ENCODE measurements at regions of chr7 and their contacts with region 1.

Region 1: GRCh38 chr7:28408960-28409715 is 3.2 kb upstream of the CREB5 start:
- DNase-seq: no peak
- ATAC-seq: peak; percentile 60
- H3K4me3 ChIP-seq: peak overlapping the region; percentile 53
- H3K27ac ChIP-seq: no peak overlapping the region
- H3K4me1 ChIP-seq: 0 out of 2 replicates have a peak, but pooled peaks cover 2% of the 10 kb centered on the region
- H3K27me3 ChIP-seq: peaks cover 0 to 14% of the 10 kb centered on the region in 2 experiments; a peak in 2 of 4 replicates
- CTCF ChIP-seq: no peak
- EP300 ChIP-seq: 0 out of 4 replicates have a peak, but pooled peaks of 1 of the 2 experiments have one; percentile 33
- POLR2A ChIP-seq: no peak
- RAD21 ChIP-seq: no peak

Region 2: DNA sequence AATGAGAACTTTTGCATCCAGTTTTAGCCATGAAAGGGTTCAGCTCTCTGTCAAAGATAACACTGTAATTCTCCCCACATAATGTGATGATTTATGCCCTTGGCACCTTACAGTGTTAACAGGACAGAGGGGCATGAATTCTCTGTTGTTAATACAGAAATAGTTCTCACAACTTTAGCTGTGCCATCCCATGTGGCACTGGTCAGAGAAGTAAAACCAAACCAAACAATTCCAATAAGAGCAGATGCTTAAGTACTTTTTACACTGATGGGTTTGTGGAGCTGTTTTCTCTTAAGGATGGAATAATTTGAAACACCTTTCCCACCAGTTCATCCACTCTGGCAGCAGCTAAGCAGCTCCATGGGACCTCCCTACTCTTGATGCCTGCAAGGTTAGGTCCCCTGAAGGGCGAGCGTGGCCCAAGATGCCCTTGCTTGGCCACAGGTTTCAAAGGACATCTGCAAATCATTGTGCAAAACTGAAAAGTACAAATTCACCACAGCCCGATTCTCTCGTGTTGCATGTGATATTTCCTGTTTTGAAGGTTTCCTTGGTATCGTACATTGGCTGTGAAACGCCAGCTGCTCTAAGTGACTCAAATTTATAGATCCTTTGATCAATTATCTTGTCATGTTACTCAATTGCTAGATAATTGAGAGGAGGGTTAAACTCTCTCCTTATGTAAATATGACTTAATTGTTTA is 79.3 kb before region 1 on chr7:
- CTCF ChIA-PET with region 1: no interaction called
- POLR2A ChIA-PET with region 1: interaction called, 10 read pairs
- RAD21 ChIA-PET with region 1: no interaction called
- SMC1A ChIA-PET with region 1: no interaction called
- in situ Hi-C with region 1: no loop called
- intact Hi-C with region 1: no loop called
- DNase-seq: no peak
- ATAC-seq: peak; percentile 77
- H3K4me3 ChIP-seq: no peak overlapping the region
- H3K27ac ChIP-seq: no peak overlapping the region
- H3K4me1 ChIP-seq: peaks cover 3% of the 10 kb centered on the region; the same call in 1 of the 2 replicates
- H3K27me3 ChIP-seq: no peaks in the 10 kb centered on the region; a peak in 1 of 4 replicates
- CTCF ChIP-seq: no peak
- EP300 ChIP-seq: peak; percentile 32 to 79; a peak in 2 of 4 replicates
- POLR2A ChIP-seq: no peak
- RAD21 ChIP-seq: no peak

Region 3: DNA sequence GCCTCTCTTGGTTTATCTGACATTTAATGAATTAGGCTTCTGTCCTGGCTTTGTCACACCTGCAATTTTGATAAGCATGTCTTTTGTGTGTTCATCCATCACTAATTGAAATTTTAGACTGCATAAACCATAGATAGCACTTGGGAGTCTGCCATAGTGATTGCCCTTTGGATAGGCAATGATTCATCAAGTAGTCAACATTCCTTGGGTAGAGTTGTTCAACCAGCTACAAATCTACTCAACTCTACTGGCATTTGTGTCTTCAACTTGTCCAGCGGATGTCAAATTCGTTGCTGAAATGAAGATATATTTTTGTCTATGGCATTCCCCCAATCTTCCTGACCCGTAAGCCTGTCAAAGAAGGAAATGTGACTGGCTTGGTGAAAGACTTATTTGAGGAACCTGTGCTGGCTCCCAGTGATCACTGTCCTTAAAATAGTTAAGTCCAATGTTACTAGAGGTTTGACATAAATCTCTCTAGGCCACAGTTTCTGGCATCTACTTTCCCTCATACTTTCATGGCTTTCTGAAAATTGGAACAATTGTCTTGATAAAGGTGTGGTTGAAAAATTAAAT is 30.5 kb before region 1 on chr7:
- CTCF ChIA-PET with region 1: no interaction called
- POLR2A ChIA-PET with region 1: no interaction called
- RAD21 ChIA-PET with region 1: no interaction called
- SMC1A ChIA-PET with region 1: no interaction called
- in situ Hi-C with region 1: no loop called
- intact Hi-C with region 1: no loop called
- DNase-seq: no peak
- ATAC-seq: no peak
- H3K4me3 ChIP-seq: no peak overlapping the region
- H3K27ac ChIP-seq: no peak overlapping the region
- H3K4me1 ChIP-seq: no peaks in the 10 kb centered on the region; the same call in 1 of the 2 replicates
- H3K27me3 ChIP-seq: no peaks in the 10 kb centered on the region
- CTCF ChIP-seq: no peak
- EP300 ChIP-seq: no peak
- POLR2A ChIP-seq: no peak
- RAD21 ChIP-seq: no peak

Region 4: DNA sequence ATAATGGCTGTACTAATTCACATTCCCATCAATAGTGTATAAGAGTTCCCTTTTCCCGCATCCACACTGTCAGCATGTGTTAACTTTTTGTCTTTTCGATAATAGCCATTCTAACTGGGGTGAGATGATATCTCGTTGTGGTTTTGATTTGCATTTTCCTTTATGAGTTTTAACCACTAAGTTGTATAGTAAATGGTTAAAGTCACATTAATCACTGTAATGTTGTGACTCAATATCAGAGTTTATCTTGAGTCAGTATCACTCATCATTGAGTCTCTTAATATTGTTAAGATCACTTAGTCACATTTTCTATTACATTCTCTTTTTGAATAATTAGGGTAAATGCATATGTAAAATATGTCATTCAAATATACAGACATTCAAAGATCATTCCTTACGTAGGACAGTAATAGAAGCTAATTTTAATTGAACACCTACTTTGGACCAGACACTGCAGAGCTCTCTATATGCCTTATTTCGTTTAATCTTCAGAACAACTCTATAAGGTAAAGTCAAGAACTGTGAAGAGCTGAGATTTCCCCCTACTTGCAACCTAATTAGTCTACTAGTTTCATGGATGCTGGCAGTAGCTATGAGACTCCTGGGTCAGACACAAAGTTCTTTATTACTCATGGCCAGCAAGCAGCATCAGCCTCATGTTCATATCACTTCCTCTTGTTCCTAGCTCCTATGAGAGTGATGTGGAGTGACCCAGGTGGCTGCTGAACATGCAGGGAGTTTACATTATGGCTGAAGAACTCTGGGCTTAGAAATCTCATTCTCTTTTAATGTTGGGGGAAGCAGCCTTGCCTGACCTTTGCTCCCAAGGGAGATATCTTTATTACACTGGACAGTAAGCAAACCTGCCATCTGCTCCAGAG is 33.6 kb after region 1 on chr7:
- CTCF ChIA-PET with region 1: interaction called, 7 read pairs
- POLR2A ChIA-PET with region 1: no interaction called
- RAD21 ChIA-PET with region 1: interaction called, 3 read pairs
- SMC1A ChIA-PET with region 1: interaction called, 8 read pairs
- in situ Hi-C with region 1: no loop called
- intact Hi-C with region 1: loop called (anchors 2 kb)
- DNase-seq: no peak
- ATAC-seq: peak; percentile 92
- H3K4me3 ChIP-seq: no peak overlapping the region
- H3K27ac ChIP-seq: no peak overlapping the region
- H3K4me1 ChIP-seq: no peaks in the 10 kb centered on the region; the same call in 1 of the 2 replicates
- H3K27me3 ChIP-seq: no peaks in the 10 kb centered on the region; a peak in 1 of 4 replicates
- CTCF ChIP-seq: no peak
- EP300 ChIP-seq: peak in 1 of 2 experiments; percentile 63; a peak in 1 of 4 replicates
- POLR2A ChIP-seq: no peak
- RAD21 ChIP-seq: no peak

Region 5: GRCh38 chr7:28509251-28510022 is 100.3 kb after region 1 on chr7:
- CTCF ChIA-PET with region 1: interaction called, 9 read pairs
- POLR2A ChIA-PET with region 1: interaction called, 4 read pairs
- RAD21 ChIA-PET with region 1: interaction called, 16 read pairs
- SMC1A ChIA-PET with region 1: interaction called, 6 read pairs
- in situ Hi-C with region 1: no loop called
- intact Hi-C with region 1: loop called (anchors 1 kb)
- DNase-seq: peak; percentile 45
- ATAC-seq: peak; percentile 95
- H3K4me3 ChIP-seq: peak overlapping the region; percentile 14; the same call in 1 of the 2 replicates
- H3K27ac ChIP-seq: peak overlapping the region; percentile 70
- H3K4me1 ChIP-seq: peaks cover 17% of the 10 kb centered on the region
- H3K27me3 ChIP-seq: no peaks in the 10 kb centered on the region
- CTCF ChIP-seq: no peak
- EP300 ChIP-seq: peak; percentile 65 to 74
- POLR2A ChIP-seq: peak; percentile 43; the same call in 1 of the 2 replicates
- RAD21 ChIP-seq: peak; percentile 24; the same call in 1 of the 2 replicates

Region 6: DNA sequence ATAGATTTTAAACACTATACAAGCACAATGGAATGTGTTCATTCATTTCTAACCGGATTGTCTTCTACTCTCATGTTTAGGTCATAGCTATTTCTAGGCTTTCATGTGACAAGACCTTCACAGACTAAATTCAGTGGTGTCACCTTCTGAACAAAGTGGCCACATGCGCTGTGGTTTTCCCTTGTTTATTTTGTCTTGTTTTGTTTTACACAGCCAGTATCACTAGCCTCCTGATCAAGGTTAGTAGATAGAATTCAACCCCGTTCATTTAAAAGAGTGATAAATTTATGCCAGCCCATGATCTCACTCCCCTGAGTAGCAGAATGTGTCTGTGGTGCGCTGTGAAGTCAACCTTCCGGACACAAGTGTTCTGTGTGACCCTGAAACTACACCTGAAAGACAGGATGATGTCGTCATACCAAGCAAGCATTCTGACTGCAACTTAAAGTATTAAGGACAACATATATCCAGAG is 212.3 kb after region 1 on chr7:
- CTCF ChIA-PET with region 1: interaction called, 16 read pairs
- POLR2A ChIA-PET with region 1: interaction called, 5 read pairs
- RAD21 ChIA-PET with region 1: interaction called, 38 read pairs
- SMC1A ChIA-PET with region 1: interaction called, 25 read pairs
- in situ Hi-C with region 1: no loop called
- intact Hi-C with region 1: loop called (anchors 2 kb)
- DNase-seq: peak; percentile 45
- ATAC-seq: peak; percentile 82
- H3K4me3 ChIP-seq: no peak overlapping the region
- H3K27ac ChIP-seq: peak overlapping the region; percentile 45; the same call in 1 of the 2 replicates
- H3K4me1 ChIP-seq: peaks cover 3% of the 10 kb centered on the region; the same call in 1 of the 2 replicates
- H3K27me3 ChIP-seq: no peaks in the 10 kb centered on the region
- CTCF ChIP-seq: no peak
- EP300 ChIP-seq: peak; percentile 76 to 90; a peak in 3 of 4 replicates
- POLR2A ChIP-seq: no peak
- RAD21 ChIP-seq: 0 out of 2 replicates have a peak, but pooled peaks have one; percentile 19

Region 7: DNA sequence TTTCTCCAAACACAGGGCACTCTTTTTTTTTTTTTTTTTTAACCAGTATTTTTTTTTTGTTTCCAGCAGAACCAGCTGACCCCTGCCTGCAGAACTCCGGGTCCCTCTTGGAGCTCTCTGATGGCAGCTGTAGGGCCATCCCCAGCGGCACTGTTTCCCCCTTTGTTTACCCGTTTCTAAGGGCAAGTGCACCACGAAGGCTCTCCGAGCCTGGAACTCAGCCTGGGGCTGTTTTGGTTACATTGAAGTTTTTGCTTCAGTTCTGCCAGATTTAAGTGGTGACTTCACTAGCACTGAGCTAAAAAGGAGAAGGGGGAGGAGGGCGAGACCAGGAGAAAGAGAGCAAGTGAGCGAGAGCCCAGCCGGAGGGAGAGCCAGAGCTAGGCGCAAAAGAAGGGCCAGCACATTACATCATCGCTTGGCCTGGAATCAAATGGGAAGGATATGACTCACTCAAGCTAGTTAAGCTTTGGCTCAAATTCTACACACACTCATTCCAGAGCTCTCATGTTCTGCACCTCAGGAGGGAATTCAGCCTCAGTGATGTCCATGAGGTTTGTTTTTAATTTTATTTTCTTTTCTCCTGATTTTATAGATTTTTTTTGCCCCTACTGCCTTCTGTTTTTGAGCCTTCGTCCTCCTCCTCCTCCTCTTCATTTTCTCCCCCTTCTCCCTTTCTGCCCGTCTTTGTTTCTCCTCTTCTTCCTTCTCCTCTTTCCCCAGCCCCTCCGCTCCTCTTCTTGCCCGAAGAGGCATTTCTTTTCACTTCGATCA is 276.7 kb after region 1 on chr7:
- CTCF ChIA-PET with region 1: no interaction called
- POLR2A ChIA-PET with region 1: no interaction called
- RAD21 ChIA-PET with region 1: interaction called, 3 read pairs
- SMC1A ChIA-PET with region 1: interaction called, 3 read pairs
- in situ Hi-C with region 1: no loop called
- intact Hi-C with region 1: loop called (anchors 1 kb)
- DNase-seq: no peak
- ATAC-seq: peak; percentile 78
- H3K4me3 ChIP-seq: peak overlapping the region; percentile 36
- H3K27ac ChIP-seq: no peak overlapping the region; the same call in 1 of the 2 replicates
- H3K4me1 ChIP-seq: peaks cover 19% of the 10 kb centered on the region
- H3K27me3 ChIP-seq: no peaks in the 10 kb centered on the region
- CTCF ChIP-seq: no peak
- EP300 ChIP-seq: 0 out of 4 replicates have a peak, but pooled peaks of 1 of the 2 experiments have one; percentile 7
- POLR2A ChIP-seq: no peak
- RAD21 ChIP-seq: no peak

Measured in GM12878 (cell line).